Esophagus muscularis mucosa (tissue), 4 donors: ENCODE measurements at regions of chr4 and their contacts with region 1.

Region 1: GRCh38 chr4:80365928-80366327 is 30.4 kb downstream of the CFAP299 start:
- DNase-seq: no peak
- H3K4me3 ChIP-seq: no peak overlapping the region
- H3K27ac ChIP-seq: no peak overlapping the region
- H3K4me1 ChIP-seq: peaks cover 0 to 7% (median 2%) of the 10 kb centered on the region in 4 donors
- H3K27me3 ChIP-seq: no peaks in the 10 kb centered on the region
- CTCF ChIP-seq: peak; percentile 49 to 64 (median 60)
- EP300 ChIP-seq: no peak
- POLR2A ChIP-seq: no peak

Region 2: DNA sequence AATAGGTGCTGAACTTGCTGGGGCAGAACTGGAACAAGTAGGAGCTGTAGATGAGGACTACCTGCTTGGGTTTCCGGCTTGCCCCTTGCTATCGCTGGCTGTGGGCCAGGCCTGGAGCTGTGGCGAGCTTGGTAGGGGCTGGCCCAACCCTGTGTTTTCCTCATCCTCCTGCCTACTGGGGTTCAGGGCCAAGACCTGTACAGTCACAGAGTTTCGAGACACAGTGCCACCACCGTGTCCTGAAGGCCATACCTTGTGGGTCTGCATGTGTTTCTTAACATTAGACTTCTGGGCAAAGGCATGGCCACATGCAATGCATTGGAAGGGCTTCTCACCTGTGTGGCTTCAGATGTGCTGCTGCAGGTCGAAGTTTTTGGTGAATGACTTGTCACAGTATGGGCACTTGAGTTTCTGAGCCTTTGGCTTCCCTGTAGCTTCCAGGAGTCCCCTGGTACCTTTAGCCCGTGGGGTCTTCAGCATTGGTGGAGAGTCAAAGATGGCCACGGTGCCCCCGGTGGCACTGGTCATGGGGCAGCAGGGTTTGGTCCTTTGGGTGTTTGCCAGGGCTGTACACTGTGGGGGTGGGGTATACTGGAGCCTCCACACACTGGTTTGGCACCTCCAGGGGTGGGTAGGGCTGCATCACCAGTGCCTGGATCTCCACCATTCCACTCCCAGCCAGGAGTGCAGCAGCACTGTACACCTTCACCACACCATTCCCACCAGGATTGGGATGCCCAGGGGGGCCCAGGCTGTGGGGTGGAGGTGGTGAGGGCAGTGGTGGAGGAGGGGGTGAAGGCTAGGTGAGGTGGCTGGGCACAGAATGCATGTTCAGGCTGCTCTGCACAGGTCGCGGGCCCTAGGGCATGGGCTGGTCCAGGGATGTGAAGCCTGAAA is 21.7 kb after region 1 on chr4:
- intact Hi-C with region 1: no loop called
- DNase-seq: peak; percentile 87
- H3K4me3 ChIP-seq: no peak overlapping the region
- H3K27ac ChIP-seq: no peak overlapping the region
- H3K4me1 ChIP-seq: no peaks in the 10 kb centered on the region
- H3K27me3 ChIP-seq: no peaks in the 10 kb centered on the region
- CTCF ChIP-seq: no peak
- EP300 ChIP-seq: no peak
- POLR2A ChIP-seq: no peak

Region 3: DNA sequence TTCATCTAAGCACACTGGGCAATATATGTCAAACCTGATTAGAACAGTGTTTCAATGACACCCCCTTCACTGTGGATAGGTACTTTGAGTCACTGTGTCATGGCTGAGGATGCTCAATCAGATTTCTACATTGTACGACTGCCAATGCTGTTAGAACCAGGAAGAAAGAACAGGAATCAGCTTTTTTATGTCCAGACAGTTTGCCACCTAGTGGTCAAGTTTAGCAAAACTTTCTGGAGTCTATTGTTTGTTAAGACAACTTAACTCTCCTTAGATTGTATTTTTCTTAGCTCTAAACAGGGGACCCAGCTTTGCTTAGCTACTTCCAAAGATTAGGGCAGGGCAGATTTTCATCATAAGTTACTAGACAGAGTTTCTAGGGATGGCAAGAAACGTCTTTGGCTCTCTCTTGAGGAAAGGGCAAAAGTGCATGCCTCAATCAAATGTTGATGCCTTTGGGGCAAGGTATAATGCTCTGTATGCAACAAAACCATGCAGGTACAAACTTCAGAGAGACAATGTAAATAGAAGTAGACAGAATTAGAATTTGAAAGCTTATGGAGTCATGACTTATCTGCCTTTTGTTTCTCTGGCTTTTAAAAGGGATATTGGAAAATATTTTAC is 624.1 kb after region 1 on chr4:
- intact Hi-C with region 1: loop called (anchors 5 kb)
- DNase-seq: no peak
- H3K4me3 ChIP-seq: no peak overlapping the region
- H3K27ac ChIP-seq: no peak overlapping the region
- H3K4me1 ChIP-seq: peaks cover 0 to 3% (median 0%) of the 10 kb centered on the region in 4 donors
- H3K27me3 ChIP-seq: no peaks in the 10 kb centered on the region
- CTCF ChIP-seq: peak; percentile 49 to 72 (median 60)
- EP300 ChIP-seq: no peak
- POLR2A ChIP-seq: no peak

Region 4: GRCh38 chr4:81052119-81053068 is 686.5 kb after region 1 on chr4:
- intact Hi-C with region 1: loop called (anchors 5 kb)
- DNase-seq: no peak
- H3K4me3 ChIP-seq: no peak overlapping the region
- H3K27ac ChIP-seq: peak overlapping the region; percentile 2 to 74 (median 45)
- H3K4me1 ChIP-seq: peaks cover 4 to 52% (median 49%) of the 10 kb centered on the region in 4 donors
- H3K27me3 ChIP-seq: no peaks in the 10 kb centered on the region
- CTCF ChIP-seq: peak; percentile 77 to 83 (median 80)
- EP300 ChIP-seq: no peak
- POLR2A ChIP-seq: no peak